Posterior vena cava (tissue), 2 donors: ENCODE measurements at regions of chr4 and their contacts with region 1.

Region 1: DNA sequence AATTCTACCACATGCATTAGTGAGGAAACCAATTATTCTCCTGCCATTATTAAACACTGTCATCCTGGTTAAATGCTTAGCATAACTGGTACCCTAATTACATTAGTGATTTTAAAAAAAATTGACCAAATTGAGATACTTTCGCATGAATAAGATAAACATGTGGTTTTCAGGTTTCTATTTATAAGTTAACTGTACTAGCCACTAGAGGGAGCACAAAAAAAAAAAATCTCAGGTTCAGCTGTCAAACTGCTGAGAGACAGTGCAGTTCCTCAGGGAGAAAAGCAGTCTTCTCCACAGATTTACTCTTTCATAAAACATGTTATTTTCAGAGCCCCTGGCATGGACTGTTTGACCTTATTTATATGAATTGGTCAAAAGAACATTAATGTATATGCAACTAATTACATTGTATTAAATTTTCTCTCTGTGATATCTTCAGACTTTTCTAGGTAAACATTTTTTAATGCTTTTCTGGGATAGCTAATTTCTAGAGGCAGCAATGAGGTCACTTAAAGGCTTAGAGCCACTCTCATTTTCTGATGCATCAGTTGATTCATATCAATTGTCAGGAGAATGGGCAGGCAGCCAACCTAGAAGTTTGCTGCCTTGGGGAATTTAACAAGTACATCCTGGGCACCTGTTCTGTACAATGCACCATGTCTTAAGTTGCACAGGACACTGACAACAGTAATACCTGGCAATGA is 167.5 kb downstream of the CDS1 start:
- DNase-seq: no peak

Region 2: GRCh38 chr4:83328521-83329187 is 1421.8 kb before region 1 on chr4:
- intact Hi-C with region 1: loop called in 1 of 2 experiments (anchors 5 kb)
- DNase-seq: no peak

Region 3: DNA sequence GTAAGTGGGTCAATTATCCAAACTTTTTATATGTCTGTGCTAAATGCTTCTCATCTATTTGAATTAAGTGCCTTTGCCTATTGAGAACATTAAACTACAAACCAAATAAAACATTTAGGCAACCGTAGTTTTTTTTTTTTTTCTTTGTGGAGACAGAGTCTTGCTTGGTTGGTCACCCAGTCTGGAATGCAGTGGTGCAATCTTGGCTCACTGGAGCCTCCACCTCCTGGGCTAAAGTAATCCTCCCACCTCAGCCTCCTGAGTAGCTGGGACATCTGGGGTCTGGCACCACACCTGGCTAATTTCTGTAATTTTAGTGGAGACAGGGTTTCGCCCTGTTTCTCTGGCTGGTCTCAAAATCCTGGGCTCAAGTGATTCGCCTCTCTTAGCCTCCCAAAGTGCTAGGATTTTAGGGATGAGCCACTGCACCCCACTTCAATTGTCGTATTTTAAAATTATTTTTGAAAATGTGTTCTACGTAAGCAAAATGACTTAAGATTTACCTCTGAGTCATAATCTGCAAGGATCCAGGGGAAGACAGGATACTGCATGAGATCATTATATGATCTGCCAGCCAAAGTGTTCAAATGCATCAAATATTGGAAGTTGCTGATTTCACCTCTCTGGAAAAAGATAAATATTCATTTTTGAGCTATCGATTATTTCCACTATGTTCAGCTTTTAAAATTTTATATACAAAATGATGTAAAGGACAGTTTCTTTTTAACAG is 41.8 kb before region 1 on chr4:
- intact Hi-C with region 1: no loop called
- DNase-seq: no peak

Region 4: GRCh38 chr4:84971319-84971932 is 221.0 kb after region 1 on chr4:
- intact Hi-C with region 1: loop called (anchors 5 kb)
- DNase-seq: no peak

Region 5: GRCh38 chr4:85005865-85006377 is 255.5 kb after region 1 on chr4:
- intact Hi-C with region 1: no loop called
- DNase-seq: no peak